Activated CD4-positive, alpha-beta T cell treated with anti-CD3 and anti-CD28 coated beads for 36 hours (primary cell): ENCODE measurements at regions of chr1 and their contacts with region 1.

Region 1: DNA sequence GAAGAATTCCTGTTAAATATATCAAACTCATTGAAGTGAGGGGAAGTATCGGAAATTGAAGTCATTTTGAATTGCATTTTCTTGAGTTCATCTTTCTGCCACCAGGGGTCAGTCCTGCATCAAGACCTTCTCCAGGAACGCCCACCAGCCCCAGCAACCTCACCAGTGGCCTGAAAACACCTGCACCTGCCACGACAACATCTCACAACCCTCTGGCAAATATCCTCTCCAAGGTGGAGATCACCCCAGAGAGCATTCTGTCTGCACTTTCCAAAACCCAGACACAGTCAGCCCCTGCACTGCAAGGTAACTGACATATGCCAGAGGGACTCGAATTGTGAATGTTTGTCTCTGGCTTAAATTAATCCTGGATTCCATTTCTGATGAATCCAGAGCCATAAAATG is 22.8 kb upstream of the TARS2 start:
- DNase-seq: peak; percentile 85
- ATAC-seq: peak; percentile 69
- H3K4me3 Mint-ChIP-seq: no peak overlapping the region
- H3K27ac Mint-ChIP-seq: no peak overlapping the region
- H3K4me1 Mint-ChIP-seq: peaks cover 4% of the 10 kb centered on the region
- H3K27me3 Mint-ChIP-seq: no peaks in the 10 kb centered on the region

Region 2: GRCh38 chr1:149942207-149942606 is 522.2 kb before region 1 on chr1:
- CTCF ChIA-PET with region 1: no interaction called
- POLR2A ChIA-PET with region 1: no interaction called
- intact Hi-C with region 1: no loop called
- DNase-seq: no peak
- ATAC-seq: no peak
- H3K4me3 Mint-ChIP-seq: no peak overlapping the region
- H3K27ac Mint-ChIP-seq: no peak overlapping the region
- H3K4me1 Mint-ChIP-seq: peaks cover 26% of the 10 kb centered on the region
- H3K27me3 Mint-ChIP-seq: no peaks in the 10 kb centered on the region

Region 3: GRCh38 chr1:150529017-150529416 is 64.6 kb after region 1 on chr1:
- CTCF ChIA-PET with region 1: interaction called, 7 read pairs
- POLR2A ChIA-PET with region 1: no interaction called
- intact Hi-C with region 1: loop called (anchors 1 kb)
- DNase-seq: no peak
- ATAC-seq: no peak
- H3K4me3 Mint-ChIP-seq: no peak overlapping the region
- H3K27ac Mint-ChIP-seq: no peak overlapping the region
- H3K4me1 Mint-ChIP-seq: no peaks in the 10 kb centered on the region
- H3K27me3 Mint-ChIP-seq: no peaks in the 10 kb centered on the region

Region 4: DNA sequence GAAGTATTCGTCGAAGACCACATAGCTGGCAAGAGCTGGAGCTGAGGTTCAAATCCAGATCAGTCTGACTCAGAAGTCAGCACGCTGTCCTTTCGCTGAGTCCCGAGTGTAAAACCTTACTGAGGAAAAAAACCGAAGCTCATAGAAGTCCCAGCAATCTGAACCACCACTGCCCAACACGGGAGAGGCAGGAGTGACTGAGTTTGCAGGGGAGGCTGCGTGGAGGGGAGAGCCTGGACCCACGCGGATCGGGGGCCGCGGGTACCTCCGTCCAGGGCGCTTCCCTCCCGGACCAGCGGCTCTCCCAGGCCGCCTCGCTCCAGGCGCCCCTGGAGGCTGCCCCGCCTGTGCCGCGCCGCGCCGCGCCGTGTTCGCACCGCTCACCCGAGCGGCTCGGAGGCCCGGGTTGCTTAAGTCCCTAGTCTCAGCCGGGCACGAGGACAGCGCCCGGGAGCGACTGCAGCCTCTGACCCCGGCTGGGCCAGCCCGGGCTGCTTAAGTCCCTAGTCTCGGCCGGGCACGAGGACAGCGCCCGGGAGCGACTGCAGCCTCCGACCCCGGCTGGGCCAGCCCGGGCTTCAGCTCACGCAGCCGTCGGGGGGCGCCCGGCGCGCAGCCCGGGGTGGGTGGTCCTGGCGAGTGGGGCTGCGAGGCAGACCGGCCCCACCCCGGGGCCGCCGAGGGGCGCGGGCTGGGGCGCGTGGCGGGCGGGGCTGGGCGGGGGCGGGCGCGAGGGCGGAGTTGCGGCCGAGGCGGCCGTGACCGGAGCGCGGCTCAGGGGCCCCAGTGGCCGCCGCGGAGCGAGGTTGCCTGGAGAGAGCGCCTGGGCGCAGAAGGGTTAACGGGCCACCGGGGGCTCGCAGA is 84.4 kb after region 1 on chr1 and contains the start of gene ADAMTSL4:
- CTCF ChIA-PET with region 1: no interaction called
- POLR2A ChIA-PET with region 1: no interaction called
- intact Hi-C with region 1: loop called in 1 of 2 experiments (anchors 5 kb)
- DNase-seq: peak; percentile 67
- ATAC-seq: peak; percentile 82
- H3K4me3 Mint-ChIP-seq: peak within 1 kb of the TSS; percentile 69
- H3K27ac Mint-ChIP-seq: peak within 1 kb of the TSS; percentile 42
- H3K4me1 Mint-ChIP-seq: peaks cover 31% of the 10 kb centered on the region
- H3K27me3 Mint-ChIP-seq: peaks cover 31% of the 10 kb centered on the region
- total RNA-seq, gene ADAMTSL4: 0.28 to 0.59 TPM

Region 5: DNA sequence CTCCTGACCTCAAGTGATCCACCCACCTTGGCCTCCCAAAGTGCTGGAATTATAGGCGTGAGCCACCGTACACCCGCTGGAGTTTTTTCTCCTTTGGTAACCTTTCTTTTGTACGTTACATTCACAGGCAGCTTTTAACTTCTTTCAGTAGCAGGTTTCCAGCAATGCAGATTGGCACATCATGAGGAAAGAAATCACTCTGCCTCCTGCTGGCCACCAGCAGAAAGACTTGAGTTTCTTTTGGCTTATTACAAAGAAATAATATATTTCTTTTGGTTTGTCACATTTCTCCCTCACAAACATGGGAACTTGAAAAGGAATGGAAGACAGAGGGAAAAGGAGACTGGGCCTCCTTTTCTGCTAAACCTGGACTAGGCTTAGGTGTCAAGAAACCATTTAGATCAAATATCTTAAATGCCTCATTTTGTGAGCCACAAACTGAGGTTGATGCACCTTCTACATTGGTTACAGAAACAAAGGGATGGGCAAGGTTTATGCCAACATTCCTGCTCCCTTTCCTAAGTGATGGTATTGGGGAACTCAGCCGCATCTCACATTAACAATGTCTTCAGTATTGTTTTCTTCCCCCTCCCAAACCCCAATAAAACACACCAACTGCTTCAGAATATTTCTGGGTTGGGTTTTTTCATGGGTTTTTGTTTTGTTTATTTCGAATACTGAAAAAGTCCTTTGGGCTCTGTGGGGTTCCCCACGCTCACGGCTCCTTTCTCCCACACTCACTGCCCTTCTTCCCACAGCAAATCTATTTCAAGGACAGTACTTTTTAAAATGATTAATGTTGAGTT is 157.3 kb after region 1 on chr1:
- CTCF ChIA-PET with region 1: no interaction called
- POLR2A ChIA-PET with region 1: interaction called, 6 read pairs
- intact Hi-C with region 1: loop called in 1 of 2 experiments (anchors 5 kb)
- DNase-seq: peak; percentile 77
- ATAC-seq: peak; percentile 30
- H3K4me3 Mint-ChIP-seq: peak overlapping the region; percentile 39
- H3K27ac Mint-ChIP-seq: peak overlapping the region; percentile 88
- H3K4me1 Mint-ChIP-seq: peaks cover 78% of the 10 kb centered on the region
- H3K27me3 Mint-ChIP-seq: no peaks in the 10 kb centered on the region

Region 6: DNA sequence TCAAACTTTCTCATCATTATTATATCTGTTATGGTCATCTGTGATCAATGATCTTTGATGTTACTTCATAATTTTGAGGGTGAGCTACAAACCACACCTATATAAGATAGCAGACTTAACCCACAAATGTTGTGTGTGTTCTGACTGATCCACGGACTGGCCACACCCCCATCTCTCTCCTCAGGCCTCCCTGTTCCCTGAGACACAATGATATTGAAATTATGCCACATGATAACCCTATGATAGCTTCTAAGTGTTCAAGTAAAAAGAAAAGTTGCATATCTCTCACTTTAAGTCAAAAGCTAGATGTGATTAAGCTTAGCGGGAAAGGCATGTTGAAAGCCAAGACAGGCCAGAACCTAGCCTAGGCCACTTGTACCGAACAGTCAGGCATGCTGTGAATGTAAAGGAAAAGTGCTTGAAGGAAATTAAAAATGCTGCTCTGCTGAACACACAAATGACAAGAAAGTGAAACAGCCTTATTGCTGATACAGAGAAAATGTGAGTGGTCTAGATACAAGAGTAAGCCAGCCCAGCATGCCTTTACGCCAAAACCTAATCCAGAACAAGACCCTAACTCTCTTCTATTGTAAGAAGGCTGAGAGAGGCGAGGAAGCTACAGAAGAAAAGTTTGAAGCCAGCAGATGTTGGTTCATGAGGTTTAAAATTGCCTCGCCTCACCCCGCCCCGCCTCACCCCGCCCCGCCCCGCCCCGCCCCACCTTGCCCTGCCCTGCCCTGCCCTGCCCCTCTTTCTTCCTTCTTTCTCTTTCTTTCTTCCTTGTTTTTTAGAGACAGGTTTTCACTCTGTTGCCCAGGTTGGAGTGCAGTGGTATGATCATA is 284.7 kb after region 1 on chr1:
- CTCF ChIA-PET with region 1: no interaction called
- POLR2A ChIA-PET with region 1: no interaction called
- intact Hi-C with region 1: no loop called
- DNase-seq: no peak
- ATAC-seq: peak; percentile 47
- H3K4me3 Mint-ChIP-seq: no peak overlapping the region
- H3K27ac Mint-ChIP-seq: no peak overlapping the region
- H3K4me1 Mint-ChIP-seq: no peaks in the 10 kb centered on the region
- H3K27me3 Mint-ChIP-seq: no peaks in the 10 kb centered on the region

Region 7: DNA sequence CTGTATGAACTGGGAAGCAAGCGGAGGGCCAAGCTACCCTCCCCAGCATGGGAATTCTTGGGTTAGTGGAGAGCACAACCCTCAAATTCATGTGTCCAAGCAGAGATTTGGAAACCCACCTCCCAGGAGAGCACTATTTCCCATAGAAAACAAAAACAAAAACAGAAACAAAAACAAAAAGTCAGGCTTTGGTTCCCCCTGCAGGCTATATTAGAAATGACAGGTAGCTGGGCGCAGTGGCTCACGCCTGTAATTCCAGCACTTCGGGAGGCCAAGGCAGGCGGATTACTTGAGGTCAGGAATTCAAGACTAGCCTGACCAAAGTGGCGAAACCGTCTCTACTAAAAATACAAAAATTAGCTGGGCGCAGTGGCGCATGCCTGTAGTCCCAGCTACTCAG is 531.5 kb after region 1 on chr1:
- CTCF ChIA-PET with region 1: no interaction called
- POLR2A ChIA-PET with region 1: no interaction called
- intact Hi-C with region 1: loop called in 1 of 2 experiments (anchors 5 kb)
- DNase-seq: peak; percentile 47
- ATAC-seq: peak; percentile 34
- H3K4me3 Mint-ChIP-seq: no peak overlapping the region
- H3K27ac Mint-ChIP-seq: no peak overlapping the region
- H3K4me1 Mint-ChIP-seq: peaks cover 18% of the 10 kb centered on the region
- H3K27me3 Mint-ChIP-seq: no peaks in the 10 kb centered on the region

Region 8: DNA sequence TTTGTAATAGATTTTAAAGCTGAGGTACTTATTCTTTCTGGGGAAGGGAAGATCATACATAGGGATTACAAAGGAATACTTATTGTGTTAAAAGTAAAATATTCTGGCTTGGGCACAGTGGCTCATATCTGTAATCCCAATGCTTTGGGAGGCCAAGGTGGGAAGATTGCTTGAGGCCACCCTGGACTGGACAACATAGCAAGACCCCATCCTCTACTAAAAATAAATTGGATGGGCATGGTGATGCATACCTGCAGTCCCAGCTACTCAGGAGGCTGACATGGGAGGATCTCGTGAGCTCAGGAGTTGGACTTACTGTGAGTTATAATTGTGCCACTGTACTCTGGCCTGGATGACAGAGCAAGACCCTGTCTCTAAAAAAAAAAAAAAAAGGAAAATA is 633.7 kb after region 1 on chr1:
- CTCF ChIA-PET with region 1: no interaction called
- POLR2A ChIA-PET with region 1: no interaction called
- intact Hi-C with region 1: no loop called
- DNase-seq: no peak
- ATAC-seq: no peak
- H3K4me3 Mint-ChIP-seq: no peak overlapping the region
- H3K27ac Mint-ChIP-seq: no peak overlapping the region
- H3K4me1 Mint-ChIP-seq: no peaks in the 10 kb centered on the region
- H3K27me3 Mint-ChIP-seq: no peaks in the 10 kb centered on the region